Activated CD8-positive, alpha-beta T cell treated with anti-CD3 and anti-CD28 coated beads for 36 hours (primary cell): ENCODE measurements at regions of chr6 and their contacts with region 1.

Region 1: DNA sequence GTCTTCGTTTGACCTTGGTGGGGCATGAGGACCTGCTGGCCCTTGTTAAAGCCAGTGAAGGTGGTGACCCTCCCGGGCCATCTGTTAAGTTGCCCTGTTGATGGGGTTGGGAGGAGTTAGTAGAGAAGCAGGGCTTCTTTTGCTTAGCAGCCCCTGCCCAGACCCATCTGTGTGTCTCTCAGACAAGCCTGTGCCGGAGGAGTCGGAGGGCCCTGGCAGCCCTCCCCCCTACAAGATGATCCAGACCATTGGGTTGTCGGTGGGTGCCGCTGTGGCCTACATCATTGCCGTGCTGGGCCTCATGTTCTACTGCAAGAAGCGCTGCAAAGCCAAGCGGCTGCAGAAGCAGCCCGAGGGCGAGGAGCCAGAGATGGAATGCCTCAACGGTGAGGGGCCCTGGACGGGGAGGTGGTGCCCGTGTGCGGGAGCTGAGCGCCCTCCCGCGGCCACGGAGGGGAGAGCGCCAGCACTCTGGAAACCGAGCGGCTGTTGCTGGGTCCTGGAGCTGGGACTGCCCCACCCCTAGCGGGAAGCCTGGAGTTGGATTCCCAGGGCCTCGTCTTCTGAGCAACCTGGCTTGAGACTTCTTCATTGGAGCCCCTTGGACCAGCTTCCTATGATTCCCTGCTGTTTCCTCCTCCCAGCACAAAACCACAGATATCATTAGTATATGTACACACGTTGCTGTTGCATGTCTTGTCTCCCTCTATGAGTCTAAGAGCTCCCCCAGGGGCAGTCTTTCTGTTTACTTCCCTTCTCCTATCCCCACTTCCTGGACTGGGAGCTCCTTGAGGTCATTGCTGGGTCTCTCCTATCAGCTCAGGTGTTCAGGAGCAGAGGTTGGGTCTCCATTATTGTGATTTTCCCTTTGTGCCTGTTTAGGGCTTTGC is 27.6 kb upstream of the SRF start:
- DNase-seq: peak; percentile 86
- ATAC-seq: peak; percentile 93
- H3K4me3 Mint-ChIP-seq: peak overlapping the region; percentile 76
- H3K27ac Mint-ChIP-seq: peak overlapping the region; percentile 97
- H3K4me1 Mint-ChIP-seq: peaks cover 24% of the 10 kb centered on the region
- H3K27me3 Mint-ChIP-seq: no peaks in the 10 kb centered on the region
- CTCF ChIP-seq: peak; percentile 92

Region 2: GRCh38 chr6:42901536-42901957 is 241.9 kb before region 1 on chr6:
- CTCF ChIA-PET with region 1: interaction called, 38 read pairs
- POLR2A ChIA-PET with region 1: no interaction called
- intact Hi-C with region 1: loop called (anchors 5 kb)
- DNase-seq: peak; percentile 79
- ATAC-seq: peak; percentile 100
- H3K4me3 Mint-ChIP-seq: peak overlapping the region; percentile 41
- H3K27ac Mint-ChIP-seq: peak overlapping the region; percentile 13
- H3K4me1 Mint-ChIP-seq: peaks cover 14% of the 10 kb centered on the region
- H3K27me3 Mint-ChIP-seq: no peaks in the 10 kb centered on the region
- CTCF ChIP-seq: peak; percentile 86

Region 3: DNA sequence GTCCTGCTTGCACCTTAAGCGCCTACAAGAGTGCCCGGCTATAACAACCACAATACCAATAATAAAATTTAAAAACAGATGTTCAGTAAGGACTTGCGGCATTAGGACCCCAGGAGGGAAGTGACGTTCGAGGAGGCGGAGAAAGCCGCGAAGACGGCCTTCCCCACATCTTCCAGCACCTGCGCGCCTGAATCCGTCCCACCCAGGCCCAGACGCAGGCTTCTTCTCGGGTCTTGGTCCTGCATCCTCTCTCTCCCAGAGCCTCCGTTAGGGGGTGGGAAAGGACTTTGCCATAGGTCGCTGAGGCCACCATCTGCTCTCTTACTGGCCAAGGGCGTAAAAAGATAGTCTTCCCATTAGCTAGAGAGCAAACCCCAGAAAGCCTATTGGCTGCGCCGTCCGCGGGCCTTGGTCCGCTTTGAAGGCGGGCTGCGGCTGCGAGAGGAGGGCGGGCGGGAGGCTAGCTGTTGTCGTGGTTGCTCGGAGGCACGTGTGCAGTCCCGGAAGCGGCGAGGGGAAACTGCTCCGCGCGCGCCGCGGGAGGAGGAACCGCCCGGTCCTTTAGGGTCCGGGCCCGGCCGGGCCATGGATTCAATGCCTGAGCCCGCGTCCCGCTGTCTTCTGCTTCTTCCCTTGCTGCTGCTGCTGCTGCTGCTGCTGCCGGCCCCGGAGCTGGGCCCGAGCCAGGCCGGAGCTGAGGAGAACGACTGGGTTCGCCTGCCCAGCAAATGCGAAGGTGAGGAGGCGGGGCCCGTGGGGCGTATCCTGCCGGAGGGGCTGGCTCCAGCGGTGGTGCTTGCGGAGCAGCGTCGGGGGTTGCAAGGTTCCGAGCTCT is 214.3 kb before region 1 on chr6 and contains the start of gene CNPY3:
- CTCF ChIA-PET with region 1: interaction called, 11 read pairs
- POLR2A ChIA-PET with region 1: interaction called, 3 read pairs
- intact Hi-C with region 1: no loop called
- DNase-seq: peak; percentile 98
- ATAC-seq: peak; percentile 82
- H3K4me3 Mint-ChIP-seq: peak within 1 kb of the TSS; percentile 95
- H3K27ac Mint-ChIP-seq: peak within 1 kb of the TSS; percentile 97
- H3K4me1 Mint-ChIP-seq: peaks cover 32% of the 10 kb centered on the region
- H3K27me3 Mint-ChIP-seq: no peaks in the 10 kb centered on the region
- CTCF ChIP-seq: no peak
- total RNA-seq, gene CNPY3: 46.2 to 46.8 TPM

Region 4: DNA sequence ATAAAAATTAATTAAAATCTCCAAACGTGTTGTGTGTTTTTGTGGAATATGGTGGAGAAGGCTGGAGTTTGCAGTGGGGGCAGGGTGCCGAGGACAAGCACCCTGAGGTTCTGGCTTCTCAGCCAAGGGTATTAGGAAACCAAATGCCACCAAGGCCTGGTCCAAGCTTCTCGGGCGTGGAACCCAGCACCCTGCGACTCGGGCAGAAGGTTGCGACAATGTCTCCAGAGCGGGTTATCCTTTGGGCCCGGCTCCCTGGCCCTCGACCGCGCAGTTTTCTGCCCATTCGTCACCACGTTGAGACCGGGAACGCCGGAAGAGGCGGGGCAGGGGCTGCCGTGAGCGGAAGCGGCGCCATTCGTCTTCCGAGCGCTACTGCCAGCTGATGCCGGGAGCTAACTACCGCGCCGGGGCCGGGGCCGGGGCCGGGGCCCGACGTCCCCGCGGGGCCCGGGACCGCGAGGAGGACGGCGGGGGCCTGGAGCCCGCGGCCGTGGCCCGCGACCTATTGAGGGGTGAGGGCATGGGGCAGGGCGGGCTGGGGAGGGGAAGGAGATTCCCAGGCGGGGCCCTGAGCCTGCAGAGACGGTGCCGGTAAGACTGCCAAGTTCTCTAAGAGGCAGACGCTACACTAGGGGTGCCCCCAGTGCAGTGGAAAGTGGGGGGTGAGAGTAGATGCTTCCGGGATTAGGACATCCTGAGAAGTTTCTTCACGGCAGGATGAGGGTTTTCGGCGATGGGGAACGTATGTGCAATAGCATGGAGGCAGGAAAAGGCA is 122.0 kb before region 1 on chr6 and contains the start of gene RRP36:
- CTCF ChIA-PET with region 1: interaction called, 12 read pairs
- POLR2A ChIA-PET with region 1: interaction called, 8 read pairs
- intact Hi-C with region 1: no loop called
- DNase-seq: peak; percentile 73
- ATAC-seq: peak; percentile 85
- H3K4me3 Mint-ChIP-seq: peak within 1 kb of the TSS; percentile 85
- H3K27ac Mint-ChIP-seq: peak within 1 kb of the TSS; percentile 85
- H3K4me1 Mint-ChIP-seq: peaks cover 32% of the 10 kb centered on the region
- H3K27me3 Mint-ChIP-seq: no peaks in the 10 kb centered on the region
- CTCF ChIP-seq: no peak
- total RNA-seq, gene RRP36: 47.9 to 48.0 TPM

Region 5: GRCh38 chr6:43059168-43060033 is 84.1 kb before region 1 on chr6 and contains the starts of genes KLC4 and MRPL2:
- CTCF ChIA-PET with region 1: interaction called, 32 read pairs
- POLR2A ChIA-PET with region 1: interaction called, 6 read pairs
- intact Hi-C with region 1: no loop called
- DNase-seq: peak; percentile 99
- ATAC-seq: peak; percentile 98
- H3K4me3 Mint-ChIP-seq: peak within 1 kb of the TSS; percentile 81
- H3K27ac Mint-ChIP-seq: peak within 1 kb of the TSS; percentile 92
- H3K4me1 Mint-ChIP-seq: peaks cover 37% of the 10 kb centered on the region
- H3K27me3 Mint-ChIP-seq: no peaks in the 10 kb centered on the region
- CTCF ChIP-seq: no peak
- total RNA-seq, gene KLC4: 10.6 to 11.5 TPM
- total RNA-seq, gene MRPL2: 108 TPM

Region 6: GRCh38 chr6:43075670-43076463 is 67.6 kb before region 1 on chr6 and contains the start of gene PTK7:
- CTCF ChIA-PET with region 1: interaction called, 26 read pairs
- POLR2A ChIA-PET with region 1: interaction called, 8 read pairs
- intact Hi-C with region 1: loop called (anchors 2 kb)
- DNase-seq: peak; percentile 39
- ATAC-seq: peak; percentile 80
- H3K4me3 Mint-ChIP-seq: peak within 1 kb of the TSS; percentile 61
- H3K27ac Mint-ChIP-seq: no peak within 1 kb of the TSS
- H3K4me1 Mint-ChIP-seq: peaks cover 2% of the 10 kb centered on the region
- H3K27me3 Mint-ChIP-seq: peaks cover 10% of the 10 kb centered on the region
- CTCF ChIP-seq: no peak
- total RNA-seq, gene PTK7: 3.8 to 4.1 TPM

Region 7: DNA sequence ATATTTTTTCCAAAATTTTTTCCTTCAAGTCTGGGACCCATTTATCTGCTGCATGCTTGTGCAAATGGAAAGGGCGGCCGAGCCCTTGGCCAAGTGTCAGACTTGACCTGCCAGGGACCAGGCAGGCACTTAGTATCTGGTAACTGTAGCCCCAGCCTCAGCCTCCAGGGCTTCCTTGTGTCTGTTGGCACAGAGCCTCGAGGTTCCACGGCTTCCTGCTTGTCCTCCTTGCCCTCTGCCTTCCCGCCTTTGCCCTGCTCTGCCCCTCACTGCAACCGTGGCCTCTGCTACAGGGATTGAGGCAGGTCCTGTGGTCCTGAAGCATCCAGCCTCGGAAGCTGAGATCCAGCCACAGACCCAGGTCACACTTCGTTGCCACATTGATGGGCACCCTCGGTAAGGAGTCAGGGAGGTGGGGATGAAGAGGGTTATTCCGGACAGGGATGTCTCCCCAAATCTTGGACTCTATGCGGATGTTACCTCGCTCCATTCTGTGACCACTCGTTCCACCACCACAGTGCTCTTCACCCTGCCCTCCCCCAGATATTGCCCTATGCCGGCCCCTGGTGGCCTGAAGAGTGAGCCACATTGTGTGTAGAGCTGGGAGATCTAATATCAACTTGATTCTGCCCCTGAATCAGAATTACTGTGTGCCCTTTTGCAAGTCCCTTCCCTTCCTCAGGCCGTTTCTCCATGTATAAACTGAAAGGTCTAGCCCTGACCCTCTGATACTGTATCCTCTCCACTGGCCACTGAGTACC is 13.9 kb before region 1 on chr6:
- CTCF ChIA-PET with region 1: interaction called, 15 read pairs
- POLR2A ChIA-PET with region 1: interaction called, 3 read pairs
- intact Hi-C with region 1: no loop called
- DNase-seq: peak; percentile 27
- ATAC-seq: peak; percentile 65
- H3K4me3 Mint-ChIP-seq: no peak overlapping the region
- H3K27ac Mint-ChIP-seq: no peak overlapping the region
- H3K4me1 Mint-ChIP-seq: no peaks in the 10 kb centered on the region
- H3K27me3 Mint-ChIP-seq: no peaks in the 10 kb centered on the region
- CTCF ChIP-seq: no peak

Region 8: DNA sequence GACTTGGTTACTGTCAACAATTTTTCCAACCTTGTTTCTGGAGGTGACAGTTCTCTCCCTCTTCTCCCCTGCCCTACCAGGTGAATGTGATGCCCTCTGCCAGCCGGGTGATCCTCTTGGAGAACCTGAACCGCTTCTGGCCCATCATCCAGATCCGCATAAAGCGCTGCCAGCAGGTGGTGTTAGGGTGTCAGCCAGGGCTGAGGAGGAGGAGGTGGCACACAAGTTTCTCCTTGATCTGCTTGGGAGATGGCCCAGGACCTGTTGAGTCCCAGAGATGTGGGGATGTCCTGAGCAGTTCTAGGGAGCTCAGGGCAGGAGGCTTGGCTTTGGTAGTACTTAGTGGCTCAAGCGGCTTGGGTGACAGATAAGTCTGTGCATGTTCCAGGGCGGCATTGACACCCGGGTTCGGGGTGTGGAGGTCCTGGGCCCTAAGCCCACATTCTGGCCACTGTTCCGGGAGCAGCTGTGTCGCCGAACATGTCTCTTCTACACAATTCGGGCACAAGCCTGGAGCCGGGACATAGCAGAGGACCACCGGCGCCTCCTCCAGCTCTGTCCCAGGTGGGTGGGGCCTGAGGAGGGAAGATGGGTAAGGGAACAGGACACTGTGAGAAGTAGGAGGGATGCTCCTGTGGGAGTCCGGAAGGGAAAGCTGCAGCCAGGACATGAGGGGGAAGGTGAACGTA is 59.7 kb after region 1 on chr6:
- CTCF ChIA-PET with region 1: no interaction called
- POLR2A ChIA-PET with region 1: no interaction called
- intact Hi-C with region 1: no loop called
- DNase-seq: no peak
- ATAC-seq: no peak
- H3K4me3 Mint-ChIP-seq: no peak overlapping the region
- H3K27ac Mint-ChIP-seq: no peak overlapping the region
- H3K4me1 Mint-ChIP-seq: no peaks in the 10 kb centered on the region
- H3K27me3 Mint-ChIP-seq: no peaks in the 10 kb centered on the region
- CTCF ChIP-seq: no peak

Region 9: DNA sequence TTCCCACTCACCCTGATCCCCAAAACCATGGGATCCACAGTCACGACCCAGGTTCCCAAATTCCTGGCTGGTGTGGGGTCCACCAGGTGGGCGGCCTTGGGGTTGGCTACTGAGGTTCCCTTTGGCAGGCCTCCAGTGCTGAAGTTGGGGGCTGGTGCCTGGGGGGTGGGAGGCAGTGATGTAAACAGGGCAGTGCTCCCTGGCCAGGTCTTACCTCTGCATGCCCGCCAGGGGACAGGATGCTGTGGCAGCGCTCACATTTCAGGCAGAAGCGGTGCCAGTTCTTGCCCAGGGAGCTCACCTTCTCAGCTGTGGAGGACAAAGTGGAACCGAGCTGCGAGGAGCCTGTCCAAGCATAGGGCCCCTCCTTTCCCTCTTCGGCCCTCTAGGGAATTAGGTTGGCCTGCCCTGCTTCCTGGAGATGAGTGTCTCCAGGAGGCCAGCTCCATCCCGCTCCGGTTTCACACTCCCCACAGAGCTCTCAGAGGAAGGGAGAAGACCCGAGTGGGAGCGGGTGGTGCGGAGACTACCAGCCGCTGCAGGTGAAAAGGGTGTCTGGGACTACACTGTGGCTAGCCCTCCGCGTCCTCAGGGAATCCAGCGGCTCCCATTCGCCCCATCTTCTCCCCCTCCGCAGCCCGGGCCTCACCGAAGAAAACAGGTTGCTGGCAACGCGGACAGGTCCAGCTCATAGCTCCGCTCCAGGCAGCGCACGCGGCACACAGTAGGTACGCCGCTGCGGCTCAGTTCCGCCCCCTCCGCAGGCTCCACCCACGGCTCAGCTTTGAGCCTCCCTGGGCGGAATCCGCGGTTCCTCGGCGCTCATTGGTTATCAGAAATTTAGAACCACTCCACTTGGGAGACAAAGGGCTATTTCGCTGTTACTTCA is 164.9 kb after region 1 on chr6 and contains the start of gene CRIP3:
- CTCF ChIA-PET with region 1: no interaction called
- POLR2A ChIA-PET with region 1: no interaction called
- intact Hi-C with region 1: no loop called
- DNase-seq: peak; percentile 68
- ATAC-seq: peak; percentile 90
- H3K4me3 Mint-ChIP-seq: peak within 1 kb of the TSS; percentile 74
- H3K27ac Mint-ChIP-seq: no peak within 1 kb of the TSS
- H3K4me1 Mint-ChIP-seq: peaks cover 8% of the 10 kb centered on the region
- H3K27me3 Mint-ChIP-seq: peaks cover 3% of the 10 kb centered on the region
- CTCF ChIP-seq: peak; percentile 49
- total RNA-seq, gene CRIP3: 2.2 to 2.4 TPM